Heart left ventricle (tissue), 16 donors: ENCODE measurements at regions of chr7 and their contacts with region 1.

Region 1: GRCh38 chr7:16564909-16565426 is 38.3 kb downstream of the LRRC72 start:
- DNase-seq: no peak
- ATAC-seq: peak in 2 of 4 donors; percentile 50 to 59
- H3K4me3 ChIP-seq: no peak overlapping the region
- H3K27ac ChIP-seq: no peak overlapping the region
- H3K4me1 ChIP-seq: peaks cover 0 to 5% (median 0%) of the 10 kb centered on the region in 12 donors
- H3K27me3 ChIP-seq: no peaks in the 10 kb centered on the region
- CTCF ChIP-seq: peak; percentile 63 to 90 (median 78)
- POLR2A ChIP-seq: no peak

Region 2: GRCh38 chr7:16078076-16078952 is 486.7 kb before region 1 on chr7:
- intact Hi-C with region 1: loop called (anchors 2 to 5 kb)
- DNase-seq: peak in 1 of 5 donors; percentile 45
- ATAC-seq: peak in 2 of 4 donors; percentile 65 to 66
- H3K4me3 ChIP-seq: no peak overlapping the region
- H3K27ac ChIP-seq: no peak overlapping the region
- H3K4me1 ChIP-seq: peaks cover 0 to 4% (median 0%) of the 10 kb centered on the region in 12 donors
- H3K27me3 ChIP-seq: no peaks in the 10 kb centered on the region
- CTCF ChIP-seq: peak; percentile 52 to 86 (median 74)
- POLR2A ChIP-seq: no peak

Region 3: GRCh38 chr7:16083931-16084330 is 481.0 kb before region 1 on chr7:
- intact Hi-C with region 1: loop called in 9 of 10 experiments (anchors 2 to 5 kb)
- DNase-seq: no peak
- ATAC-seq: no peak
- H3K4me3 ChIP-seq: no peak overlapping the region
- H3K27ac ChIP-seq: peak overlapping the region in 4 of 12 donors; percentile 0 to 21 (median 11)
- H3K4me1 ChIP-seq: peaks cover 0 to 7% (median 0%) of the 10 kb centered on the region in 12 donors
- H3K27me3 ChIP-seq: no peaks in the 10 kb centered on the region
- CTCF ChIP-seq: no peak
- POLR2A ChIP-seq: no peak

Region 4: GRCh38 chr7:16114633-16115032 is 450.3 kb before region 1 on chr7:
- intact Hi-C with region 1: loop called (anchors 1 to 10 kb)
- DNase-seq: no peak
- ATAC-seq: peak in 1 of 4 donors; percentile 46
- H3K4me3 ChIP-seq: no peak overlapping the region
- H3K27ac ChIP-seq: no peak overlapping the region
- H3K4me1 ChIP-seq: no peaks in the 10 kb centered on the region
- H3K27me3 ChIP-seq: no peaks in the 10 kb centered on the region
- CTCF ChIP-seq: peak; percentile 16 to 62 (median 46)
- POLR2A ChIP-seq: no peak

Region 5: DNA sequence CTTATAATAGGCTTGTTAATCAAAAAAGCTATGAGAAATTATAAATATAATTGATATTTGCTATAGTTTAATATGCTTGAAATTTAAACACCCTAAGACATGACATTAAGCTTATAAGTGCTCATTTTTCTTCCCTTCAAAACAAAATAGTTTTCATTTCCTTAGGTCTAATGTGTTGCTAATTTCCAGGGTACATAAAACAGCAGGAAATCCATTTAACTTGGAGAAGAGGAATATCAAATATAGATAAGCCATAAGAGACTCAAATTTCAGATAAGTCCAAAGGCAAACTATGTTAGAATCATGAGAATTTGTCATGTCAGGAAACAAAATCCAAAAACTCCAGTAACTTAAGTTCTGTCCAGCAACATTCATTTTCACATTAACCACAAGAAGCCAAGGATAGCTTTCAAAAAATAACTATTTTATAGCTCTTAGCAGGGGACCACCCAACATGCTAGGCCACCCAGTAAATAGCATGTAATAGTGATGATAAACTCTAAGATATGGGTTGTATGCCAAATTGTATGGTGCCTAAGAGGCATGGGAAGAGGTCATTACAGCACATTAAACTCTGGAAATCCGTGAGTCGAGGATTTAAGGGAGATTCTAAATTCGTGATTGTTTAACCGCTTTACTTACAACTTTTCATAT is 441.7 kb before region 1 on chr7:
- intact Hi-C with region 1: loop called in 4 of 10 experiments (anchors 5 to 10 kb)
- DNase-seq: no peak
- ATAC-seq: no peak
- H3K4me3 ChIP-seq: no peak overlapping the region
- H3K27ac ChIP-seq: no peak overlapping the region
- H3K4me1 ChIP-seq: no peaks in the 10 kb centered on the region
- H3K27me3 ChIP-seq: no peaks in the 10 kb centered on the region
- CTCF ChIP-seq: no peak
- POLR2A ChIP-seq: no peak

Region 6: GRCh38 chr7:16431646-16432424 is 133.1 kb before region 1 on chr7:
- intact Hi-C with region 1: loop called (anchors 2 to 5 kb)
- DNase-seq: no peak
- ATAC-seq: peak in 3 of 4 donors; percentile 45 to 76 (median 62)
- H3K4me3 ChIP-seq: no peak overlapping the region
- H3K27ac ChIP-seq: no peak overlapping the region
- H3K4me1 ChIP-seq: no peaks in the 10 kb centered on the region
- H3K27me3 ChIP-seq: no peaks in the 10 kb centered on the region
- CTCF ChIP-seq: peak; percentile 23 to 61 (median 48)
- POLR2A ChIP-seq: no peak

Region 7: GRCh38 chr7:16528520-16528919 is 36.4 kb before region 1 on chr7:
- intact Hi-C with region 1: no loop called
- DNase-seq: no peak
- ATAC-seq: no peak
- H3K4me3 ChIP-seq: no peak overlapping the region
- H3K27ac ChIP-seq: no peak overlapping the region
- H3K4me1 ChIP-seq: no peaks in the 10 kb centered on the region
- H3K27me3 ChIP-seq: no peaks in the 10 kb centered on the region
- CTCF ChIP-seq: no peak
- POLR2A ChIP-seq: no peak